Activated CD8-positive, alpha-beta T cell treated with anti-CD3 and anti-CD28 coated beads for 36 hours (primary cell): ENCODE measurements at regions of chr10 and their contacts with region 1.

Region 1: GRCh38 chr10:8044908-8045725 is 9.4 kb upstream of the GATA3 start:
- DNase-seq: peak; percentile 59
- ATAC-seq: peak; percentile 31
- H3K4me3 Mint-ChIP-seq: peak overlapping the region; percentile 51
- H3K27ac Mint-ChIP-seq: no peak overlapping the region
- H3K4me1 Mint-ChIP-seq: peaks cover 64% of the 10 kb centered on the region
- H3K27me3 Mint-ChIP-seq: peaks cover 79% of the 10 kb centered on the region
- CTCF ChIP-seq: no peak

Region 2: DNA sequence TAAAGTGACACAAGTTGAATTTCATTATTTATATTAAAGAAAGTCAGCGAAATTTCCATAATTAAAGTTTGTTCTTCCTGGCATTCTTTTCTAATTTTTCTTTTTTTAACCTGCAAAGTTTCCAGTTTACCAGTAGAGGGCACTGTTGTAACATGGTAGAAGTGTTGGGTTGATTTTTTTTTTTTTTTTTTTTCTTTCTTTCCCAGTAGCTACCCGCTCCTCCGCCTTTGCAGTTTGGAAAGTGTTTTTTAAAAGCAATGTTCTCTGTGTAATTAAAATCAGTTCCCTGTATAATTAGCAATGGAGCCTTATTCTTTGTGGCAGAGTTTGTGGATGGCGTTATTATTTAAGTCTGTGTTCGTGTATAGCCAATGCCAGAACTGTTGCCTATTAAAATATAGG is 173.1 kb before region 1 on chr10:
- CTCF ChIA-PET with region 1: no interaction called
- POLR2A ChIA-PET with region 1: no interaction called
- intact Hi-C with region 1: loop called (anchors 5 kb)
- DNase-seq: no peak
- ATAC-seq: no peak
- H3K4me3 Mint-ChIP-seq: peak overlapping the region; percentile 70
- H3K27ac Mint-ChIP-seq: no peak overlapping the region
- H3K4me1 Mint-ChIP-seq: peaks cover 22% of the 10 kb centered on the region
- H3K27me3 Mint-ChIP-seq: no peaks in the 10 kb centered on the region
- CTCF ChIP-seq: peak; percentile 96

Region 3: DNA sequence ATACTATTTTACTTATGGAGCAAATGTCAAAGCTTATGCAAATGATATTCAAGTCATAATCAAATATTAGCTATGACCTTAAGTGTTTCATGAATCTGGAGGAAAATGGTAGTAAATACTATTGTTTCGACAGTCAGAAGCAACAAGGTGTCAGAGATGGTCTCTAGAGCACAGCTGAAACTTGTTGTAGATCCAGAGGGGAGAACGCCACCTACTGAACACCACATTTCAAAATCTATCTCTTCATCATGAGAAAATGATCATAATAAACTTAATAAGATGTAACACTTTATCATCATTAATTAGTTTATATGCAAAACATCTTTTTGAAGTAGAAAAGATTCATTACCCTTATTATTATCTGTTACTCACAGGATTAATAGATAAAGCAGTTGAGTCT is 428.1 kb after region 1 on chr10:
- CTCF ChIA-PET with region 1: no interaction called
- POLR2A ChIA-PET with region 1: no interaction called
- intact Hi-C with region 1: loop called (anchors 10 kb)
- DNase-seq: peak; percentile 23
- ATAC-seq: no peak
- H3K4me3 Mint-ChIP-seq: no peak overlapping the region
- H3K27ac Mint-ChIP-seq: no peak overlapping the region
- H3K4me1 Mint-ChIP-seq: peaks cover 2% of the 10 kb centered on the region
- H3K27me3 Mint-ChIP-seq: peaks cover 11% of the 10 kb centered on the region
- CTCF ChIP-seq: no peak

Region 4: DNA sequence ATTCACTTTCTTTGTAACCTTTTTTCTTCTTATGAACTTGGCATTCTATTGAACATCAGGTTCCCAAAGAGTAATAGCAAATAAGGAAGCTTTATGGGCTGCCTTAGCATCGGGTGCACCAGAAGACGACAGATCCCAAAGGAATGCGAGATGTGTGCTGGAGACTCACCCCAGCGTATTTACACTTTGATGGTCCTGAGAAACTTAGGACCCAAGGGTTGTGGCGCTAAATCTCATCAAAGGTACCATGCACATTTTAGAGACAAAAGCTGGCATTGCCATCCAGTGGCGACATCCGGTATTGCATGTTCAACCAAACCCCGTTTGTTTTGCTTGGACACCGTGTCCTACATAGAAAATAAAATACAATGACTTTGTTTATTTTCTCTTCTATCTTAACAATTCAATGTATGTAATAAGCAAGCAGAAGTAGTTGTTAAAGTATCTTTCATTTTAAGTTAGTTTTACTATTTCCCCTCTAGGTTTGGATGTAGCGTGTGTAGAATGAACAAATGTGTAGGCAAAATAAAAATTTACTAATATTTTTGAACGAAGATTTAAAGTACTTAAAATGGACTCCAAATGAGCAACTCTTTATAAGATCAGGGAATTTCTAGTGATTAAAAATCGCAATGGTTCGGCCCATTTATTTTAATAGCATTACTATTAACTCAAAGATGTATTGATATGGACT is 1164.1 kb after region 1 on chr10:
- CTCF ChIA-PET with region 1: no interaction called
- POLR2A ChIA-PET with region 1: no interaction called
- intact Hi-C with region 1: loop called (anchors 10 kb)
- DNase-seq: peak; percentile 86
- ATAC-seq: peak; percentile 87
- H3K4me3 Mint-ChIP-seq: no peak overlapping the region
- H3K27ac Mint-ChIP-seq: peak overlapping the region; percentile 52
- H3K4me1 Mint-ChIP-seq: peaks cover 10% of the 10 kb centered on the region
- H3K27me3 Mint-ChIP-seq: peaks cover 12% of the 10 kb centered on the region
- CTCF ChIP-seq: peak; percentile 94

Region 5: DNA sequence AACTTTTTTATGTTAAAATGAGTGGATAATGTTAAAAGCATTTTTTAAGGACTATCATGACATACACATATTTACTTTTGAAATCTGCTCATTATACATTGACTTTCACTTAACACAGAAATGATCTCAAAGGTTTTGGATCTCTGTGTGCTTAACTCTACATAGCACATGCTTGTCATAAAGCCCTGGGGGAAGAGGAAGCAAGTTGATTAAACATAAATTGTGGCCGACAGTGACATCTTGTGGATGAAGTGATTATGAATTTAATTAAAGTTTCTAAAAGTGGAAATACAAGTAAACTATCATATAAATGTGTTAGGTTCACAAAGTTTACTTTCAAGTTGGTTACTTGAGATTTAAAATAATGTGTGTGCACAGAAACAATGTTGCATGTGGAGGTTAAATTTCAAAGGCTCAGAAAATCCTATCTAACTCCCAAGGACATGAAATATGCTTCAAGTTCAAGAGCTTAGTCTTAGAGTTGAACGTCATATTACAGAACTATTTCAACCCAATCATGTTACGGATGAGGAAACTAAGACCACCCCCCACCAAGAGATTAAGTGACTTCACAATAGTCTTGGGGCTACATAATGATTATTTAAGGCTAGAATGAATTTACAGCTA is 1257.1 kb after region 1 on chr10:
- CTCF ChIA-PET with region 1: no interaction called
- POLR2A ChIA-PET with region 1: no interaction called
- intact Hi-C with region 1: loop called (anchors 5 kb)
- DNase-seq: peak; percentile 19
- ATAC-seq: peak; percentile 37
- H3K4me3 Mint-ChIP-seq: no peak overlapping the region
- H3K27ac Mint-ChIP-seq: no peak overlapping the region
- H3K4me1 Mint-ChIP-seq: no peaks in the 10 kb centered on the region
- H3K27me3 Mint-ChIP-seq: peaks cover 10% of the 10 kb centered on the region
- CTCF ChIP-seq: peak; percentile 50